Activated T-helper 2 cell treated with anti-CD3 and anti-CD28 coated beads, Interferon-gamma antibody, Interleukin-2, Interleukin-4, amounts not matched to agents 10 μg/mL and 5 μg/mL and 100 μg/mL, durations not matched to agents 14 hours and 24 hours and 36 hours (primary cell): ENCODE measurements at regions of chr17 and their contacts with region 1.

Region 1: GRCh38 chr17:42405963-42406495 is 17.0 kb downstream of the CAVIN1 start:
- DNase-seq: peak; percentile 73
- H3K4me3 Mint-ChIP-seq: no peak overlapping the region
- H3K27ac Mint-ChIP-seq: no peak overlapping the region
- H3K4me1 Mint-ChIP-seq: peaks cover 9% of the 10 kb centered on the region
- H3K27me3 Mint-ChIP-seq: peaks cover 3% of the 10 kb centered on the region

Region 2: GRCh38 chr17:42221937-42222745 is 183.9 kb before region 1 on chr17:
- intact Hi-C with region 1: loop called (anchors 10 kb)
- DNase-seq: peak; percentile 38
- H3K4me3 Mint-ChIP-seq: no peak overlapping the region
- H3K27ac Mint-ChIP-seq: peak overlapping the region; percentile 22
- H3K4me1 Mint-ChIP-seq: peaks cover 4% of the 10 kb centered on the region
- H3K27me3 Mint-ChIP-seq: no peaks in the 10 kb centered on the region

Region 3: GRCh38 chr17:42312285-42313130 is 93.5 kb before region 1 on chr17:
- intact Hi-C with region 1: loop called (anchors 2 kb)
- DNase-seq: peak; percentile 72
- H3K4me3 Mint-ChIP-seq: peak overlapping the region; percentile 33
- H3K27ac Mint-ChIP-seq: peak overlapping the region; percentile 68
- H3K4me1 Mint-ChIP-seq: peaks cover 59% of the 10 kb centered on the region
- H3K27me3 Mint-ChIP-seq: no peaks in the 10 kb centered on the region

Region 4: DNA sequence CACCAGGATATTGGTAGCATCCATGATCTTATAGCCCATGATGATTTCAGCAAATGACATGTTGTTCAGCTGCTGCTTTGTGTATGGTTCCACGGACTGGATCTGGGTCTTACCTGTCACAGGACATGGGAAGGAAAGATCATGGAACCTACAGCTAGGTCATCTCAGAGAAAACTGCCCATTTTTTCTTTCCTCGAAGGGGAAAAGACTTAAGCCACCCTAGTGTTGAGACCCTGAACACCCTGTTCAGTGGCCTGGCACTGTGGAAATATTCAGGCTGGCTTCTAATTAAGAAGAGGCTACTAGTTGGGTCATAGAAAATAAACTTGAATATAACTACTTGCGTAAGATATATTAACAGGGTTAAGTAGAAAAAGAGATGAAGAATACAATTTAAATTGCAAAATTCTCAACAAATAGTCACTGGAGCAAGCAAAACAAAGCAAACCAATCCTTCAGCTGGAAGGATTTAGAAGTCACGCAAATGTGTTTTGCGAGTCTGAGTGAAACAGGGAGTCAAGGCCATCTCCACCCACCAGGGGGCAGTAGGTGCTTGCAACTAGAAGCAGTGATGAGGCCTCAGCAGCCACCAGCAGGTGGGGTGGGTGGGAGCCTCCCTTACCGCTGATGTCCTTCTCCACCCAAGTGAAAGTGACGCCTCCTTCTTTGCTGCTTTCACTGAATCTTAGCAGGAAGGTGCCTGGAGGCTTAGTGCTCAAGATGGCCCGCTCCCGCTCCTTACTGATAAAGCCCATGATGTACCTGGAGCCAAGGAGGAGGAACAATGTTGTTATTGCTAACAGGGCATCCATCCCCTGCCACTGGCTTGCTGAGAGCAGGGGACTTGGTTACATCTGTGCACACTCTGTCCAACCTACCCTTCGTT is 83.4 kb before region 1 on chr17:
- intact Hi-C with region 1: loop called (anchors 1 kb)
- DNase-seq: peak; percentile 88
- H3K4me3 Mint-ChIP-seq: no peak overlapping the region
- H3K27ac Mint-ChIP-seq: no peak overlapping the region
- H3K4me1 Mint-ChIP-seq: peaks cover 34% of the 10 kb centered on the region
- H3K27me3 Mint-ChIP-seq: no peaks in the 10 kb centered on the region

Region 5: DNA sequence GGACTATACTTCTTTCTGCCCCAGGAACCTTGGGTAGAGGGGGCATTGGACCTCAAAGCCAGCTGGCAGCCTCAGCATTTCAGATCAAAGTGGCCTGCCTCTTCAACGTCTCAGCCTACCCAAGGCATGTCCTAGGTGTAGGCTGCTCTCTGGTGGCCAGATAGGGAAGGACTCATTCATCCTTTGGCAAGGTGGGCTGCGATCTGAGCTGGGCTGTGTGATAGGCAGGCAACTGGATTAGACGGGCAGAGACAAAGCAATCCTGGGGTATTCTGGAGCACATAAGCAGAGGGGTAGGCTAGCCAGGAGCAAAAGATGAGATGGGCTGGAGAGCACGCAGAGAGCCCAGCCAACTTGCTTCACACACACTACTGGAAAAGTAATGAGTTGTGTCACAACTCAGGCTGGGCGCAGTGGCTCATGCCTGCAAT is 121.3 kb after region 1 on chr17:
- intact Hi-C with region 1: loop called (anchors 10 kb)
- DNase-seq: peak; percentile 58
- H3K4me3 Mint-ChIP-seq: no peak overlapping the region
- H3K27ac Mint-ChIP-seq: no peak overlapping the region
- H3K4me1 Mint-ChIP-seq: peaks cover 26% of the 10 kb centered on the region
- H3K27me3 Mint-ChIP-seq: peaks cover 2% of the 10 kb centered on the region